Posterior vena cava (tissue), 2 donors: ENCODE measurements at regions of chr3 and their contacts with region 1.

Region 1: GRCh38 chr3:65772758-65773157 is 266.0 kb downstream of the MAGI1 start:
- DNase-seq: no peak

Region 2: DNA sequence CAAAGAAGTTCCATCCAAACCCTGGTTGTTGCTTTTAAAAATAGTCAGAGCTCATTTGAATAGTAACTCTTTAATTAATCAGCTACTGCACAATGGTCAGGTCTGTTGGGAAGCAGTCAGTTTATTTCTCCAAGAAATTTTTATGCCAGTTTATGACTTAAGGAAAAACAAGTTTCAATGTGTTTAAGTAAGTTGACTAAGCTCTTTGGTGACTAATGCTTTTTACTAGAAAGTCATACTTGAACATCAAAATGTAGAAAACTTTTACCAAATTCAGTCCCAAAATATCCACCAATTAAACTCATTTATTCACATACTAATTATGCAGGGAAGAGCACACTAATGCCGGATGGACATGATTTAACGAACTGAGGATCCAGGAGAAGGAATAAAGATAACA is 1569.5 kb before region 1 on chr3:
- intact Hi-C with region 1: loop called in 1 of 2 experiments (anchors 5 kb)
- DNase-seq: no peak

Region 3: GRCh38 chr3:65785065-65785645 is 12.4 kb after region 1 on chr3:
- intact Hi-C with region 1: no loop called
- DNase-seq: no peak